ENCODE measurements at regions of chr2 and their contacts with region 1.

Region 1: GRCh38 chr2:102020596-102021181 is 28.9 kb downstream of the IL1R2 start:
- DNase-seq: peak; percentile 80
- ATAC-seq: peak; percentile 95
- H3K4me3 ChIP-seq: no peak overlapping the region
- H3K27ac ChIP-seq: no peak overlapping the region
- H3K4me1 ChIP-seq: peaks cover 57% of the 10 kb centered on the region
- H3K27me3 ChIP-seq: no peaks in the 10 kb centered on the region
- CTCF ChIP-seq: peak; percentile 100
- EP300 ChIP-seq: no peak; a peak in 1 of 4 replicates
- POLR2A ChIP-seq: no peak
- RAD21 ChIP-seq: peak; percentile 99

Region 2: DNA sequence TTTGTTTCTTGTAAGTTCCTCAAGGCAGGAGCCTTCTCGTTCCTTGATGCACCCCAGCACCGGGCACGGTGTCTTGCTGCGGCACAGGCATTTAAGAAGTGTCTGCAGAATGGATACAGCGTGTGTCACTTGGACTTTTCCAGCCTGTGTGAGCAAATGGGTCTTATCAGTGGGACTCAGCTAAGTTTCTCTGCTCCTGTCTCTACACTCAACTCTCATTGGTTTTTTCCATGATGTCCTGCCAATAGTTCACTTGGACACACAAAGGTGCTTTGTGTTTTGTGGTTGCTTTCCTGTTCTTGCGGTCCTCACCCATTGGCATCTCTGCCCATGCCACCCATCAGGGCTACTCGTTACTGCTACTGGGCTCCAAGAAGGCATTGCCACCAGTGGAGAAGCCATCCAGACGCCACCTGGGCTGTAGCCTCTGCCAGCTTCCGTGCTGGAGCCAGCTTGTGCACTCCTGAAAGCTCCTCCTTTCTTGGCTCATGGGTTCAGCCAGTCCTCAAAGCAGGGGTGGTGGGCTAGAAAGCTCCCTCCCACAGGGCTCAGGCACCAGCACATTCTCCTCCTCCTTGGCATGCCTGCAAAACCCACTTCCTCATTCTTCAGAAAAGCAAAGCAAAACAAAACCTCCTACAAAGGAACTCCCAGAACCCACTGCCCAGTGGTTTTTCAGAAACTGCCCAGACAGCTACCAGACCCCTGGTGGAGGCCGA is 12.5 kb after region 1 on chr2:
- CTCF ChIA-PET with region 1: no interaction called
- POLR2A ChIA-PET with region 1: interaction called, 17 read pairs
- in situ Hi-C with region 1: no loop called
- intact Hi-C with region 1: no loop called
- DNase-seq: peak; percentile 80
- ATAC-seq: peak; percentile 53
- H3K4me3 ChIP-seq: peak overlapping the region; percentile 8 to 59 (median 14); a peak in 5 of 6 replicates
- H3K27ac ChIP-seq: peak overlapping the region; percentile 73
- H3K4me1 ChIP-seq: peaks cover 83% of the 10 kb centered on the region
- H3K27me3 ChIP-seq: no peaks in the 10 kb centered on the region
- CTCF ChIP-seq: peak; percentile 11; the same call in 1 of the 2 replicates
- EP300 ChIP-seq: peak in 1 of 2 experiments; percentile 50; a peak in 2 of 4 replicates
- POLR2A ChIP-seq: peak; percentile 30 to 62; a peak in 3 of 4 replicates
- RAD21 ChIP-seq: no peak

Region 3: GRCh38 chr2:102103992-102104871 is 83.5 kb after region 1 on chr2:
- CTCF ChIA-PET with region 1: no interaction called
- POLR2A ChIA-PET with region 1: interaction called, 3 read pairs
- in situ Hi-C with region 1: loop called (anchors 10 kb)
- intact Hi-C with region 1: no loop called
- DNase-seq: no peak
- ATAC-seq: no peak
- H3K4me3 ChIP-seq: no peak overlapping the region
- H3K27ac ChIP-seq: peak overlapping the region; percentile 26
- H3K4me1 ChIP-seq: peaks cover 98% of the 10 kb centered on the region
- H3K27me3 ChIP-seq: no peaks in the 10 kb centered on the region
- CTCF ChIP-seq: no peak
- EP300 ChIP-seq: no peak
- POLR2A ChIP-seq: no peak
- RAD21 ChIP-seq: no peak

Region 4: GRCh38 chr2:102235491-102235890 is 214.8 kb after region 1 on chr2:
- CTCF ChIA-PET with region 1: interaction called, 38 read pairs
- POLR2A ChIA-PET with region 1: interaction called, 5 read pairs
- in situ Hi-C with region 1: loop called (anchors 5 kb)
- intact Hi-C with region 1: loop called (anchors 1 kb)
- DNase-seq: peak; percentile 61
- ATAC-seq: peak; percentile 94
- H3K4me3 ChIP-seq: peak overlapping the region in 1 of 3 experiments; percentile 10; a peak in 1 of 6 replicates
- H3K27ac ChIP-seq: no peak overlapping the region
- H3K4me1 ChIP-seq: peaks cover 59% of the 10 kb centered on the region
- H3K27me3 ChIP-seq: no peaks in the 10 kb centered on the region
- CTCF ChIP-seq: peak; percentile 80
- EP300 ChIP-seq: no peak
- POLR2A ChIP-seq: no peak
- RAD21 ChIP-seq: peak; percentile 82

Region 5: DNA sequence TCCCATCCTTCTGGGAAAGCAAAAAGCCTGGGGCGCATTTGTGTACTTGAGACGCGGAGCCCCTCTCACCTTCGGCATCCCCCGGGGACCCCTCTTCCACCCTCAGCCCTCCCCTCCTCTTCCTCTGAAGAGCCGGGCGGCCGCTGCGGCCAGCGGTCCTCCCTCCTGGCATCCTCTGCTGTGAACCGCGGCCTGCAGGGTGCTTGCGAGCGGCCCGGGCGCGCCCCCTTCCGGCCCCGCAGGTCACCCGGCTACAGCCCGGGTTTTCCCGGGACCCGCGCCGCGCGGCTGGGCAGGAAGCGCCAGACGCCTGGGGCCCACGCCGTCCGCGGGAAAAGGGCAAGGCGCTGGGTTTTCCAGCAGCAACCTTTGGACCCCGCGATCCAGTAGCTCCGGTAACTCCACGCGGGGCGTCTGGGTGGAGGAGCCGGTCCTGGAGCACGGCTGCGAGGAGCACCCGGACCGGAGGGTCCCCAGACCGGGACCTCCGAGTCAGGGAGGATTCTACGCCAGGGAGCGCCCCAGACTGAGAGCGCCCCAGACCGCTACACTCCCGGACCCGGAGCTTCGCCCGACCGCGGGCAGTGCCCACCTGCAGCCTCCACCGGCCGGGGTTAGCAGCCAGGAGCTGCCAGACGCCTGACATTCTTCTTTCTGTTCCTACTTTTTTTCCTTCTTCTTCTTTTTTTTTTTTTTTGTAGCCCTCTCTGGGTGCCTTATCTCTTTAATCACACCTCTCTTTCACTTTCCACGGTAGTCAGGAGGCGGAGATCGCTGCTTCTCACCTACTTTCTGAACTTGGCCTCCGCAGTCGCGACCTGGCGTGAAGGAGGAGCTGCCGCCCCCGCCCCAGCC is 335.1 kb after region 1 on chr2 and contains the start of gene IL18R1:
- CTCF ChIA-PET with region 1: interaction called, 3 read pairs
- POLR2A ChIA-PET with region 1: no interaction called
- in situ Hi-C with region 1: no loop called
- intact Hi-C with region 1: loop called (anchors 5 kb)
- DNase-seq: peak; percentile 53
- ATAC-seq: peak; percentile 100
- H3K4me3 ChIP-seq: peak within 1 kb of the TSS; percentile 55 to 77 (median 70)
- H3K27ac ChIP-seq: no peak within 1 kb of the TSS
- H3K4me1 ChIP-seq: no peaks in the 10 kb centered on the region; the same call in 1 of the 2 replicates
- H3K27me3 ChIP-seq: peaks cover 2 to 18% of the 10 kb centered on the region in 2 experiments; a peak in 4 of 5 replicates
- CTCF ChIP-seq: peak; percentile 90
- EP300 ChIP-seq: no peak
- POLR2A ChIP-seq: no peak
- RAD21 ChIP-seq: peak; percentile 94
- total RNA-seq, gene IL18R1: 0.04 TPM in 1 of 2 replicates, not detected in the other

Measured in HepG2 (cell line).